Right cardiac atrium (tissue), 5 donors: ENCODE measurements at regions of chr9 and their contacts with region 1.

Region 1: DNA sequence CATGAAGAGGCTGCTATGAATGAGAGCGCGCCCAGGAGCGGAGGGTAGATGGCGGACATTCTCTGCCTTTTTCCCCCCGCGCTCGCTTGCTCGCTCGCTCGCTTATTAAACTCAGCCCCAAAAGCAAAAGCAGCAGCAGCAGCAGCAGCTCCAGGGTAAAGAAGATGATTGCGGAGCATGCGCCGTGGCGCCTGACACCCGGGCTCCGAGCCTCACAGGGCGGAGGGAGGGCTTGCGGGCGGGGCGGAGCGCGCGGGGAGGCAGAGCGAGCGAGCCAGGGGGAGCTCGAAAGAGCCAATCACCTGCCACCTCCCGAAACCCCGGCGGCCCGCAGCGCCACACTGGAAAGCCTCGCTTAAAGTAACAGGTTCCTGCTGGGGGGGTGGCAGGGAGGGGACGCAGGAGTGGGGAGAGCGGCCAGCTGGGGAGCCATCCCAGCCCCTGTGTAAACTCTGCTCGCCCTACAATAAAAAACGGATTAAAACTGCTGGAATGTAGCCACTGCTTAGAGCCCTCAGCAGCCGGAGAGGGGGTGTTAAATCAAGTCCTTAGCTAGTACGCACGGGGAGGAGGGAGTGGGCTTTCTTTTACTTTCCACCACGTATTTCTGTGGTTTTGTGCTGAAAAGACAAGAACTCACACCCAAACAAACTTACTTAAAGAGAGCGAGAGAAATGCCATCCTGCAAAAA is at the start of gene MLLT3:
- DNase-seq: peak; percentile 97 to 99 (median 99)
- ATAC-seq: peak; percentile 98
- H3K4me3 ChIP-seq: peak within 1 kb of the TSS; percentile 96
- H3K27ac ChIP-seq: peak within 1 kb of the TSS; percentile 85
- H3K4me1 ChIP-seq: no peaks in the 10 kb centered on the region
- H3K27me3 ChIP-seq: no peaks in the 10 kb centered on the region
- total RNA-seq, gene MLLT3: 5.8 to 14.0 (median 8.8) TPM

Region 2: DNA sequence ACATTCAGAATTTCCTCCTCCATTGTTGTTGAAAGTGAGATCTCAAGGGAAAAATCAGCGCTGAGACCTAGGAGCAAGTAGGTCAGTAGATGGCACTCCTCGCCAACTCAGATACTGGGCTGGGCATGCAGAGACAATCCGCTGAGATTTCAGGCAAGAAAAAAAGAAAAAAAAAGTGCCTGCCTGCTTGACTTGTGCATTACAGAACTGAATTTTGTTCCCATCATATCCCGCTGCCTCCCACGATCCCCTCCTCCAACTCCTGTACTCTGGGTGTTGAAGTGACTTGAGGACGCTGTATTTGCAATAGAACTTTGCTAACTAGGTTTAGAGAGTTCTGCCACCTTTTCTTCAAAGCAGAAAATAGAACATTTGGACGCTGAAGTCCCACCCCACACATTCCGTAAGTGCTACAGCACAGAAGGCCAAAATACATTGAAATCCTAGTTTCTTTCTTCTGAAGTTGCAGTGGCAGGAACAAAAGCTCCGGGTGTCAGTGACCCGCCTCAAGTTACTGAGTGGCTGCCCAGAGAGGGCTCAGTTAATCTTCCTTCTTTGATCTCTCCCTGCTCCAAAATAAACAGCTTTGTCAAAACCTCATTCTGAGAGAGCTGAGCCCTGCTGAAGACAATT is 266.0 kb before region 1 on chr9:
- intact Hi-C with region 1: loop called in 3 of 4 experiments (anchors 5 to 10 kb)
- DNase-seq: peak; percentile 56 to 71 (median 67)
- ATAC-seq: peak; percentile 91 to 94
- H3K4me3 ChIP-seq: peak overlapping the region; percentile 40
- H3K27ac ChIP-seq: peak overlapping the region; percentile 1
- H3K4me1 ChIP-seq: no peaks in the 10 kb centered on the region
- H3K27me3 ChIP-seq: no peaks in the 10 kb centered on the region

Region 3: GRCh38 chr9:20361656-20362570 is 260.6 kb before region 1 on chr9:
- intact Hi-C with region 1: loop called in 2 of 4 experiments (anchors 10 kb)
- DNase-seq: no peak
- ATAC-seq: no peak
- H3K4me3 ChIP-seq: no peak overlapping the region
- H3K27ac ChIP-seq: no peak overlapping the region
- H3K4me1 ChIP-seq: no peaks in the 10 kb centered on the region
- H3K27me3 ChIP-seq: no peaks in the 10 kb centered on the region

Region 4: GRCh38 chr9:20684035-20684872 is 61.8 kb after region 1 on chr9 and contains the start of gene FOCAD:
- intact Hi-C with region 1: loop called in 2 of 4 experiments (anchors 5 to 10 kb)
- DNase-seq: peak; percentile 97 to 98 (median 98)
- ATAC-seq: peak; percentile 100
- H3K4me3 ChIP-seq: peak within 1 kb of the TSS; percentile 92
- H3K27ac ChIP-seq: peak within 1 kb of the TSS; percentile 98
- H3K4me1 ChIP-seq: peaks cover 5% of the 10 kb centered on the region
- H3K27me3 ChIP-seq: no peaks in the 10 kb centered on the region
- total RNA-seq, gene FOCAD: 29.4 to 40.5 (median 37.9) TPM

Region 5: GRCh38 chr9:20941174-20941690 is 318.8 kb after region 1 on chr9:
- intact Hi-C with region 1: loop called in 3 of 4 experiments (anchors 2 to 10 kb)
- DNase-seq: peak; percentile 23 to 64 (median 35)
- ATAC-seq: peak; percentile 86 to 88
- H3K4me3 ChIP-seq: no peak overlapping the region
- H3K27ac ChIP-seq: no peak overlapping the region
- H3K4me1 ChIP-seq: no peaks in the 10 kb centered on the region
- H3K27me3 ChIP-seq: no peaks in the 10 kb centered on the region